Activated naive CD4-positive, alpha-beta T cell treated with anti-CD3 and anti-CD28 coated beads for 36 hours (primary cell): ENCODE measurements at regions of chr15 and their contacts with region 1.

Region 1: GRCh38 chr15:82985688-82986441 is at the start of gene RAMAC:
- DNase-seq: peak; percentile 96
- H3K4me3 Mint-ChIP-seq: peak within 1 kb of the TSS; percentile 96
- H3K27ac Mint-ChIP-seq: peak within 1 kb of the TSS; percentile 94
- H3K4me1 Mint-ChIP-seq: peaks cover 25% of the 10 kb centered on the region
- H3K27me3 Mint-ChIP-seq: no peaks in the 10 kb centered on the region
- total RNA-seq, gene RAMAC: 15.3 to 15.6 TPM

Region 2: DNA sequence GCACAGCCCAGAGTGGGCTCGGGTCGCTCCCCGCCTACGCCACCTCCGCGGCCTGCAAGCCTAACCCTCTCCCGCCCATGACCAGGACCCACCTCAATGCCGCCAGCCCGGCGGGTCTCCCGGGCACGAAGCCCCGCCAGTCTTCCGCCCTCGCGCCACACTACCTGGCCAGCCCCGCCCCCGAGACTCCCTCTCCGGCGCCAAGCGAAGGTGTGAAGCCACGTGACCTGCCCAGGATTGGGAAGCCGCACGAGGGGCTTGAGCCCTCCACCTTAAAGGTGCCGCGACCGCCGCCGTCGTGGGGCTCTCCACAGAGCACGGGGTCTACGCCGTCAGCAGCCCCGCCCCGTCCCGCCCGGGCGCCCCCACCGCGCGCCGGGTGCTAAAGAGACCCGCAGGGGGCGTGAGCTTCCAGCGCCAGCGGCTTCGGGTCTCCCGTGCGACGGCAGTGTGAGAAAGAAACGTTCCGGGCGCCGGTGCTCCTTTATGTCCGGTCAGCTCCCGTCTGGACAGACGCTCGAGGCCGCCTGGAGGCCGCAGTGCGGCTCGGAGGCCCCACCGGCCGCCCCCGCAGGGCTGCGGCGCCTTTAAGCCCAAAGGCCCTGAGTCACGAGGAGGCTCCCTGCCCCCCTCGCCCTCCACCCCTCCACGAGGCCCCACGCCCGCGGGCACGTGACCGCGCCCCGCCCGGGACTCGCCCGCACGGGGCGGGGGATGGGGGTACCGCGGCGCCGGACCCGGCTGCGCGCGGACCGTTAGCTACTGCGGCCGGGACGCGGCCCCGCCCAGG is 338.6 kb before region 1 on chr15 and contains the start of gene CPEB1:
- CTCF ChIA-PET with region 1: no interaction called
- intact Hi-C with region 1: loop called (anchors 10 kb)
- DNase-seq: peak; percentile 39
- H3K4me3 Mint-ChIP-seq: peak within 1 kb of the TSS; percentile 48
- H3K27ac Mint-ChIP-seq: no peak within 1 kb of the TSS
- H3K4me1 Mint-ChIP-seq: peaks cover 8% of the 10 kb centered on the region
- H3K27me3 Mint-ChIP-seq: peaks cover 43% of the 10 kb centered on the region
- total RNA-seq, gene CPEB1: 0.10 TPM in 1 of 2 experiments, not detected in the other

Region 3: GRCh38 chr15:82680200-82681102 is 305.4 kb before region 1 on chr15:
- CTCF ChIA-PET with region 1: no interaction called
- intact Hi-C with region 1: loop called (anchors 1 kb)
- DNase-seq: peak; percentile 86
- H3K4me3 Mint-ChIP-seq: peak overlapping the region; percentile 88
- H3K27ac Mint-ChIP-seq: peak overlapping the region; percentile 47
- H3K4me1 Mint-ChIP-seq: peaks cover 7% of the 10 kb centered on the region
- H3K27me3 Mint-ChIP-seq: peaks cover 2% of the 10 kb centered on the region

Region 4: DNA sequence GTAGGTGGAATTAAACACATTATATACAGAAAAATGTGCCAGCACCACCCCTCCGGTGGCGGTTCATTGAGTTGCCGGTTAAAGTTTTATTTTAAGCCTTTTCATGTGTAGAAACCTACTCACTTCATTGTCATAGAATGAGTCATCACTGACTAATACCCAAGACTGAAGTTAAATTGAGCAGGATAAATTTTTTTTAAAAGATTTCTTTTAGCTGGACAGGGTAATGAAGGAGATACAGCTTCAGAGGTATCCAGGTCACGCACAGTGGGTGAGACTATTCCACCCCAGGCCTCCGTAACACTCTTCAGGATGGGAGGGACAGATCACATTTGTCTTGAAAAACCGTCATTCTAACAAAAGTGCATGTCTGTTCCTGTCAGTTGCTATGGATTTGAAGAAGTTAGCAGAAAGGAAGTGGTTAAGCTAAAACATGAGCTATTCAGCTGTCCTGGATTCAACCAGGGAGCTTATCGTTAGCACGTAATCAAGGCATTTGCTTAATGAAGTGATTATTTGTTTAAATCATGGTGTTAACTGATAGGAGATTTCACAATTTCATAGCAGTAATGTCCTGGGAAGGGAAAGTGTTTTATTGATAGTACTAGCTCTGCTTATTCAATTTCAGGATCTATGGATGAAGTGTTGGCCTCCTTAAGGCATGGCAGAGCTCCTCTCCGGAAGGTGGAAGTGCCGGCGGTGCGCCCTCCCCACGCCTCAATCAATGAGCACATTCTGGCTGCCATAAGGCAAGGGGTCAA is 153.1 kb before region 1 on chr15:
- CTCF ChIA-PET with region 1: no interaction called
- intact Hi-C with region 1: loop called (anchors 1 kb)
- DNase-seq: peak; percentile 74
- H3K4me3 Mint-ChIP-seq: no peak overlapping the region
- H3K27ac Mint-ChIP-seq: peak overlapping the region; percentile 46
- H3K4me1 Mint-ChIP-seq: peaks cover 27% of the 10 kb centered on the region
- H3K27me3 Mint-ChIP-seq: no peaks in the 10 kb centered on the region

Region 5: DNA sequence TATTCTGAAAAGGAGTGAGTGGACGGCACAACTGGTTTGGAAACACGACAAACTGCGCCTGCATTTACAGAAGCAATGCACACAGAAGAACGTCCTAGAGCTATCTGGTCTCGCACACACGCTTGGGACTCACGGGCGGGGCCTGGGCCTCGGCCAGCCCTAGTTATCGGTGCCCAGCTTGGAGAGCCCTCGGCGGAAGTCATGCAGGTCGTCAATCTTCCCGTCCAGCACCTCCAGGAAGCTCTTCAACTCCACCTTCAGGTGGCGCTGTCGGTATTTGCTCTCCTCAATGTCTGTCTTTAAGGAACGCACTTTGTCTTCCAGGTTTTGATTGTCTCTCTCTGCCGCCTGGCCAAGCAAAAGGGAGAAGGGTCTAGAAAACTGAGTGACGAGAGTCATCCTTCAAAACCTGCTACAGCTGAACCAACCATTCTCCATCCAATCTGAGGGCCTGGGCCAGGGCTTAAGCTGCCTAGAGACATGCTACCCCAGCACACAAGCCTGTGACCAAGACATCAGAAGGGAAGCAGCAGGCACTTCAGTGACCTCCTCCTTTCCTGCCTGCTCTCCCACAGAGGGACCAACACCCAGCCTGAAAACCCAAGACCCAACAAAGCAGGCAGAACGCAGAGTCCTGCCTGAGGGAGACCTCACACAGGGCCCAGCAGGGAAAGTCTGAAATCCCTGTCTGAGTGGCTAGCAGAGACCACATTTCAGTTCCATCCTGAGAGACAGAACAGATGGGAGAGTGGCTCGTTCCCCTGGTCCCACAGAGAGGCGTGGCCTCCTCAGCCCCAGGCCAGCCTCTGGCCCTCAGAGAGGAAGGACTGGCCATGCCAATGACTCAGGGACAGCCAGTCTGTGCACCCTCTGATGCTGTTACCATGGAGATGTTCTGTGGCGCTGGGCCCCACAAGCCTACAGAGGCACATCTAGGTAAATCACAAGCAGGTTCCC is 136.0 kb before region 1 on chr15:
- CTCF ChIA-PET with region 1: interaction called, 3 read pairs
- intact Hi-C with region 1: loop called (anchors 5 kb)
- DNase-seq: peak; percentile 75
- H3K4me3 Mint-ChIP-seq: no peak overlapping the region
- H3K27ac Mint-ChIP-seq: no peak overlapping the region
- H3K4me1 Mint-ChIP-seq: peaks cover 17% of the 10 kb centered on the region
- H3K27me3 Mint-ChIP-seq: no peaks in the 10 kb centered on the region